ENCODE measurements at regions of chr18 and their contacts with region 1.

Region 1: DNA sequence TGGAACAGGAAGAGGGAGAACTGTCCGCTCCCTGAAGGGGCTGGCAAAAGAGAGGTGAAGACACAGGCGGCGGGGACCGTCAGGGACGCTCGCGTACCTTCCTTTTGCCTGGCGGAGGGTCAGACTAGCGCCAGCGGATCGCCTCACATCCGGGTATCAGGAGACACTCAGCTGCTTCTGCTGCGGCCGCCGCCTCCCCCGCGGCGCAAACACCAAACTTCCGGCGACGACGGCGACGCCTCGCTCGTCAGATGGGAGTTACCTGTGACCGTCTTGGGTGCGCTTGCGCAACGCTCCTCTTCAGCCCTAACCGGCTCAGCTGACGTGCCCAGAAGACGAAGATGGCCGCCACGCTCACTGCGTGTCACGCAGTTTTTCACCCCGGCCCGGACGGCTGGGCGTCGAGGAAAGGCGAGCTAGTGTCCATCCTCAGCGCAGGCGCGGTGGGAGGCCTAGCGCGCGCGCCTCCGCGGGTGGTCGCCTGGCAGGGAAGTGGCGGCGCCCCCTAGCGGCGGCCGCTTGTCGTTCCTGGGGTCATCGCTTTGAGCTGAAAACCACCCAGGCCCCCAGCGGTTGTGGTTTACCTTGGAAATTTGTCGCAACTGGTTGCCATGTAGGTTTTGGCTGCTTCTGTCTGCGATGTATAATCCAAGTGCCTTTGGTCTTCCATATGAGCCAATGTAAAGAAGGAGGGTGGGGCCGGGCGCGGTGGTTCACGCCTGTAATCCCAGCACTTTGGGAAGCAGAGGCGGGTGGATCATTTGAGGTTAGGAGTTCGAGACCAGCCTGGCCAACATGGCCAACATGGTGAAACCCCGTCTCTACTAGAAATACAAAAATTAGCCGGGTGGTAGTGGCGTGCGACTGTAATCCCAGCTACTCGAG is at the start of gene ESCO1:
- DNase-seq: peak; percentile 98
- H3K4me3 Mint-ChIP-seq: peak within 1 kb of the TSS; percentile 99
- H3K27ac Mint-ChIP-seq: peak within 1 kb of the TSS; percentile 99
- H3K4me1 Mint-ChIP-seq: peaks cover 5% of the 10 kb centered on the region
- H3K27me3 Mint-ChIP-seq: no peaks in the 10 kb centered on the region
- CTCF ChIP-seq: peak; percentile 99
- total RNA-seq, gene ESCO1: 18.8 and 19.2 TPM in 2 replicates

Region 2: DNA sequence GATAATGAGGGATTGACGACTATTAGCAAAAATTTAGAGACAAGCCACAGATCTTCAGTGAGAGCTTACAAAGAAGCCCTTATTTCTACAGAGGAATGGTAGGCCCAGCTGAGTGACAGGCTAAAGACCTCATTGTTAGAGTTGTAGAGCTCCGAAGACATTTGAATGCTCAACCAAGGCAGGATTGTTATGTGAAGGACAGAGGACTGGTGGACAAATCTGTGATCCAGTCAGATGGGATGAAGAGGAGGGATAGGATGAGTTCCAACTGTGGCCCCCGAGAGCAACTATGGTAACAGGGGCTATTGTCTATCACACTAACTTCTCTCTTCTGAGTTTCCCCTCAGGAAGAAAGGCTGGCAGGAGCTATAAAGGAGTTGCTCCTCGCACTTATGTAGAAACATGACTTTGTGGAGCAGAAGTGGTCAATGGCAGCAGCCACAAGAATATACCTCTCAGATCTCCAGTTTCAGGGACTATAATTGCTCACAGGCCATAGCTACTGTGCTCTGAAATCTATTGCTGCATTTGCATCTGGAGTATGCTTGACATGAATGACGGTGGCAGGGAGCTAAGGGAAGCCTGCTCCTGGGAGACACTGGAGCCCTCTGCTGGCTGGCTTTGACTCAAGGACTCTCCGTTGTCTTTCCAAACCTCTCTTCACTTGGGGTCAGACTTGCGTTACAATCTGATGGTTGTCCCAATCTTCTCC is 409.0 kb before region 1 on chr18:
- CTCF ChIA-PET with region 1: interaction called, 14 read pairs
- POLR2A ChIA-PET with region 1: interaction called, 11 read pairs
- intact Hi-C with region 1: loop called (anchors 10 kb)
- DNase-seq: peak; percentile 65
- H3K4me3 Mint-ChIP-seq: no peak overlapping the region
- H3K27ac Mint-ChIP-seq: no peak overlapping the region
- H3K4me1 Mint-ChIP-seq: peaks cover 4% of the 10 kb centered on the region
- H3K27me3 Mint-ChIP-seq: peaks cover 24% of the 10 kb centered on the region
- CTCF ChIP-seq: peak; percentile 39

Region 3: DNA sequence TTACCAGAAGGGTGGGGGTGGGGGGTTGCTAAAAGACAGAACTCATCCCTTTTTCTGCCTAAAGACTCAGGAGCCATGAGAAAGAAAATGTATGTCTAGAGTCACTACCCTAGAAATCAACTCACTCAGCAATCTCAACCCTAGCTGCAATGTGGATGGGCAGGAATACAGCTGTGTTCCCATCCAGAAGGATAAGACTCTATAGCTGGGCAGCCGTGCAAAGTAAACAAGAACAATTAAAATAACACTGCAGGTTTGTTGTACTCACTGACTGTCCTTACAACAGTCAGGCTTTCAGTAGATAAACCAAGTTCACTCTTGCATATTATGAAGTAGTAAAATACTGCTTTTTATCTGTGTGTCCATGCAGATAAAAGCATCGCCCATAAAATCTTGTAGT is 74.3 kb before region 1 on chr18:
- CTCF ChIA-PET with region 1: no interaction called
- POLR2A ChIA-PET with region 1: no interaction called
- intact Hi-C with region 1: no loop called
- DNase-seq: no peak
- H3K4me3 Mint-ChIP-seq: no peak overlapping the region
- H3K27ac Mint-ChIP-seq: no peak overlapping the region
- H3K4me1 Mint-ChIP-seq: peaks cover 7% of the 10 kb centered on the region
- H3K27me3 Mint-ChIP-seq: no peaks in the 10 kb centered on the region
- CTCF ChIP-seq: no peak

Region 4: GRCh38 chr18:21557607-21558253 is 43.0 kb before region 1 on chr18:
- CTCF ChIA-PET with region 1: interaction called, 3 read pairs
- POLR2A ChIA-PET with region 1: interaction called, 10 read pairs
- intact Hi-C with region 1: no loop called
- DNase-seq: peak; percentile 82
- H3K4me3 Mint-ChIP-seq: no peak overlapping the region
- H3K27ac Mint-ChIP-seq: peak overlapping the region; percentile 72
- H3K4me1 Mint-ChIP-seq: peaks cover 7% of the 10 kb centered on the region
- H3K27me3 Mint-ChIP-seq: no peaks in the 10 kb centered on the region
- CTCF ChIP-seq: no peak

Region 5: DNA sequence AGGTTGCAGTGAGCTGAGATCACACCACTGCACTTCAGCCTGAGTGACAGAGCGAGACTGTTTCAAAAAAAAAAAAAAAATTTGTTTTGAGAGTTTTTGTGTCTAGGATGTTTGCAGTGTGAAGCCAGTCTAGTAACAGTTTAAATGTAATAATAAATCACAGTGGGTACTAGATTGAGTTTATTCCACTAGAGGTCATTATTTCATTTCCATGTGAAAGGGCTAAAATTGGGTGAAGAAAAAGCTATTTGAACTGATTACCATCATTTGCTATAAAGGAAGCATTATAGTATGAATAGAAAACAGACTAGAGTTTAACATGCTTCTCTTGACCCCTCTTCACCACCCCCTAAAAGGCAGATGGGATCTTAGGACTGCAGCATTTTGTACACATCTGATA is 31.6 kb after region 1 on chr18:
- CTCF ChIA-PET with region 1: interaction called, 3 read pairs
- POLR2A ChIA-PET with region 1: interaction called, 11 read pairs
- intact Hi-C with region 1: no loop called
- DNase-seq: no peak
- H3K4me3 Mint-ChIP-seq: no peak overlapping the region
- H3K27ac Mint-ChIP-seq: no peak overlapping the region
- H3K4me1 Mint-ChIP-seq: no peaks in the 10 kb centered on the region
- H3K27me3 Mint-ChIP-seq: no peaks in the 10 kb centered on the region
- CTCF ChIP-seq: no peak

Region 6: GRCh38 chr18:21740724-21741510 is 140.1 kb after region 1 on chr18 and contains the start of gene MIB1:
- CTCF ChIA-PET with region 1: no interaction called
- POLR2A ChIA-PET with region 1: interaction called, 39 read pairs
- intact Hi-C with region 1: loop called (anchors 1 kb)
- DNase-seq: no peak
- H3K4me3 Mint-ChIP-seq: peak within 1 kb of the TSS; percentile 87
- H3K27ac Mint-ChIP-seq: peak within 1 kb of the TSS; percentile 96
- H3K4me1 Mint-ChIP-seq: peaks cover 15% of the 10 kb centered on the region
- H3K27me3 Mint-ChIP-seq: no peaks in the 10 kb centered on the region
- CTCF ChIP-seq: no peak
- total RNA-seq, gene MIB1: 40.5 and 49.5 TPM in 2 replicates

Region 7: GRCh38 chr18:21808185-21808584 is 207.4 kb after region 1 on chr18:
- CTCF ChIA-PET with region 1: no interaction called
- POLR2A ChIA-PET with region 1: no interaction called
- intact Hi-C with region 1: no loop called
- DNase-seq: no peak
- H3K4me3 Mint-ChIP-seq: no peak overlapping the region
- H3K27ac Mint-ChIP-seq: no peak overlapping the region
- H3K4me1 Mint-ChIP-seq: peaks cover 6% of the 10 kb centered on the region
- H3K27me3 Mint-ChIP-seq: no peaks in the 10 kb centered on the region
- CTCF ChIP-seq: no peak